CD8-positive, alpha-beta T cell (primary cell): ENCODE measurements at regions of chr14 and their contacts with region 1.

Region 1: GRCh38 chr14:89178802-89179535 is 238.1 kb downstream of the FOXN3 start:
- DNase-seq: no peak
- ATAC-seq: no peak
- H3K4me3 ChIP-seq: no peak overlapping the region
- H3K4me3 Mint-ChIP-seq: no peak overlapping the region
- H3K27ac ChIP-seq: no peak overlapping the region
- H3K27ac Mint-ChIP-seq: peak overlapping the region; percentile 35
- H3K4me1 ChIP-seq: no peaks in the 10 kb centered on the region
- H3K4me1 Mint-ChIP-seq: peaks cover 17% of the 10 kb centered on the region
- H3K27me3 ChIP-seq: no peaks in the 10 kb centered on the region
- H3K27me3 Mint-ChIP-seq: no peaks in the 10 kb centered on the region
- CTCF ChIP-seq: no peak

Region 2: GRCh38 chr14:89165189-89166181 is 13.5 kb before region 1 on chr14:
- CTCF ChIA-PET with region 1: interaction called, 11 read pairs
- POLR2A ChIA-PET with region 1: no interaction called
- intact Hi-C with region 1: no loop called
- DNase-seq: peak in 1 of 9 experiments; percentile 23
- ATAC-seq: no peak
- H3K4me3 ChIP-seq: no peak overlapping the region
- H3K4me3 Mint-ChIP-seq: peak overlapping the region; percentile 42
- H3K27ac ChIP-seq: peak overlapping the region in 1 of 2 experiments; percentile 6
- H3K27ac Mint-ChIP-seq: peak overlapping the region; percentile 55
- H3K4me1 ChIP-seq: peaks cover 6% of the 10 kb centered on the region
- H3K4me1 Mint-ChIP-seq: peaks cover 40% of the 10 kb centered on the region
- H3K27me3 ChIP-seq: no peaks in the 10 kb centered on the region
- H3K27me3 Mint-ChIP-seq: no peaks in the 10 kb centered on the region
- CTCF ChIP-seq: no peak

Region 3: GRCh38 chr14:89255852-89256682 is 77.1 kb after region 1 on chr14:
- CTCF ChIA-PET with region 1: no interaction called
- POLR2A ChIA-PET with region 1: no interaction called
- intact Hi-C with region 1: no loop called
- DNase-seq: no peak
- ATAC-seq: no peak
- H3K4me3 ChIP-seq: no peak overlapping the region
- H3K4me3 Mint-ChIP-seq: no peak overlapping the region
- H3K27ac ChIP-seq: no peak overlapping the region
- H3K27ac Mint-ChIP-seq: no peak overlapping the region
- H3K4me1 ChIP-seq: peaks cover 6% of the 10 kb centered on the region
- H3K4me1 Mint-ChIP-seq: peaks cover 65% of the 10 kb centered on the region
- H3K27me3 ChIP-seq: no peaks in the 10 kb centered on the region
- H3K27me3 Mint-ChIP-seq: no peaks in the 10 kb centered on the region
- CTCF ChIP-seq: no peak

Region 4: DNA sequence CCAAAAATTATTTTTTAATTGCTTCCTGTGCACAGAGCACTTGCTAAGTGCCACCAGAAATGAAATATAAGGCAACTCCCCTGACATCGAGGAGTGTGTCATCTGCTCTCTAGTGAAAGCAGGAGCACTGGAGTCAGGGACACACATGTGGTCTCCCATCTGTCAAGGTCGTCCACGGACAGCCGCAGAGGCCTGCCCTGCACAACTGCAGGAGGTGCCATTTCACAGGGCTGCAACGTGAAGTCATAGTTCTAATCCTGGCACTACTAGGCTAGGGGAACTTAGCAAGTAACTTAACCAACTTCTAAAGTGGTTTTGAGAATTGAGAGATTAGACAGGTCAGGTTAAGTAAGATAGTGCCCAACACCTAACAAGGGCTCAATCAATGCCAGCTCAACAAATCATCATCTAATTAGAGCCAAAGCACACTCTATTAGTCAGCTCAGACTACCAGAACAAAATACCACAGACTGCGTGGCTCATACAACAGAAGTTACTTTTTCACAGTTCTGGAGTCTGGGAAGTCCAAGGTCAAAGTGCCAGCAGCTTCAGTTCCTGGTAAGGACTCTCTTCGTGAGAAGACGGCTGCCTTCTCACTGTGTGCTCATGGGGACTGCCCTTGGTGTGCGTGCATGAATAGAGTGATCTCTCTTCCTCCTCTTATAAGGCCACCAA is 207.4 kb after region 1 on chr14:
- CTCF ChIA-PET with region 1: no interaction called
- POLR2A ChIA-PET with region 1: no interaction called
- intact Hi-C with region 1: no loop called
- DNase-seq: no peak
- ATAC-seq: no peak
- H3K4me3 ChIP-seq: no peak overlapping the region
- H3K4me3 Mint-ChIP-seq: no peak overlapping the region
- H3K27ac ChIP-seq: no peak overlapping the region
- H3K27ac Mint-ChIP-seq: peak overlapping the region; percentile 18
- H3K4me1 ChIP-seq: peaks cover 15% of the 10 kb centered on the region
- H3K4me1 Mint-ChIP-seq: peaks cover 75% of the 10 kb centered on the region
- H3K27me3 ChIP-seq: no peaks in the 10 kb centered on the region
- H3K27me3 Mint-ChIP-seq: no peaks in the 10 kb centered on the region
- CTCF ChIP-seq: no peak

Region 5: GRCh38 chr14:89899917-89900663 is 721.1 kb after region 1 on chr14:
- CTCF ChIA-PET with region 1: interaction called, 3 read pairs
- POLR2A ChIA-PET with region 1: no interaction called
- intact Hi-C with region 1: loop called in 1 of 2 experiments (anchors 5 kb)
- DNase-seq: peak in 3 of 9 experiments; percentile 13 to 59 (median 45)
- ATAC-seq: no peak
- H3K4me3 ChIP-seq: no peak overlapping the region
- H3K4me3 Mint-ChIP-seq: no peak overlapping the region
- H3K27ac ChIP-seq: no peak overlapping the region
- H3K27ac Mint-ChIP-seq: no peak overlapping the region
- H3K4me1 ChIP-seq: no peaks in the 10 kb centered on the region
- H3K4me1 Mint-ChIP-seq: peaks cover 18% of the 10 kb centered on the region
- H3K27me3 ChIP-seq: no peaks in the 10 kb centered on the region
- H3K27me3 Mint-ChIP-seq: peaks cover 2% of the 10 kb centered on the region
- CTCF ChIP-seq: peak; percentile 56

Region 6: GRCh38 chr14:89915114-89915878 is 736.3 kb after region 1 on chr14:
- CTCF ChIA-PET with region 1: interaction called, 4 read pairs
- POLR2A ChIA-PET with region 1: no interaction called
- intact Hi-C with region 1: loop called (anchors 1 kb)
- DNase-seq: peak; percentile 24 to 74 (median 60)
- ATAC-seq: peak; percentile 62
- H3K4me3 ChIP-seq: no peak overlapping the region
- H3K4me3 Mint-ChIP-seq: no peak overlapping the region
- H3K27ac ChIP-seq: no peak overlapping the region
- H3K27ac Mint-ChIP-seq: no peak overlapping the region
- H3K4me1 ChIP-seq: peaks cover 3% of the 10 kb centered on the region
- H3K4me1 Mint-ChIP-seq: peaks cover 3% of the 10 kb centered on the region
- H3K27me3 ChIP-seq: no peaks in the 10 kb centered on the region
- H3K27me3 Mint-ChIP-seq: peaks cover 2% of the 10 kb centered on the region
- CTCF ChIP-seq: peak; percentile 97